Activated CD4-positive, alpha-beta T cell treated with anti-CD3 and anti-CD28 coated beads for 36 hours (primary cell): ENCODE measurements at regions of chr3 and their contacts with region 1.

Region 1: GRCh38 chr3:10758304-10759061 is 57.5 kb upstream of the SLC6A11 start:
- DNase-seq: peak; percentile 75
- ATAC-seq: peak; percentile 72
- H3K4me3 Mint-ChIP-seq: no peak overlapping the region
- H3K27ac Mint-ChIP-seq: no peak overlapping the region
- H3K4me1 Mint-ChIP-seq: peaks cover 5% of the 10 kb centered on the region
- H3K27me3 Mint-ChIP-seq: peaks cover 34% of the 10 kb centered on the region

Region 2: DNA sequence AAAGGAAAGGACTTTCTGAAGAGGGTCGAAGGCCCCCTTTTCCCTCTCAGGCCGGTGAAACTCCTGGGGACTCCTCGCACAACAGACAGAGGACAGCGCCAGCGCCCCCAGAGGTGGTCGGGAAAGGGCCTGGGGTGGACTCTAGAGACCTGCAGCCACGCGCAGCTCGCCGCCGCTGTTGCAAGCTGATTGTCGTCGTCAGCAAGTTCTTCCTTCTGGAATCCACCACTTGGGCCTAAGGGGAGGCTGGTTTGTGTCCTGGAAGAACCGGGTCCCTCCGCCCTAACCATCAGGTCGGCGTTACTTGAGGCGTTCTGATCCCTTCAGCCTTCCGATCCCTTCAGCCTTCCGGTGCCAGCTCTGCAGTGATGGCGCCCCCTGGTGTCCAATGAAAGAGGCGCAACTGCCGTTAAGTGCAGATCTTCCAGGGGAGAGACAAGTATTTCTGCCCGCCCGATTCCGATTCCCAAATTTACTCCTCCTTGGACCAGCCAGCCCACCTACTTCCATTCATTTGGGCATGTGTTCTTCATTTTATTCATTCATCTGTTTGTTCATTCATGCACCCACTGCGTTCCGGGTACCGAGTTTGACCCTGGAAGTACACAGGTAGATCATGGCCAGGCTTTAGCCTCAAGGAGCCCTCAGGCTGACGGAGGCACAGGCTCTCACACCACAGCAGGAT is 19.7 kb before region 1 on chr3:
- CTCF ChIA-PET with region 1: interaction called, 22 read pairs
- POLR2A ChIA-PET with region 1: no interaction called
- intact Hi-C with region 1: no loop called
- DNase-seq: peak; percentile 85
- ATAC-seq: peak; percentile 79
- H3K4me3 Mint-ChIP-seq: no peak overlapping the region
- H3K27ac Mint-ChIP-seq: no peak overlapping the region
- H3K4me1 Mint-ChIP-seq: peaks cover 2% of the 10 kb centered on the region
- H3K27me3 Mint-ChIP-seq: peaks cover 41% of the 10 kb centered on the region

Region 3: DNA sequence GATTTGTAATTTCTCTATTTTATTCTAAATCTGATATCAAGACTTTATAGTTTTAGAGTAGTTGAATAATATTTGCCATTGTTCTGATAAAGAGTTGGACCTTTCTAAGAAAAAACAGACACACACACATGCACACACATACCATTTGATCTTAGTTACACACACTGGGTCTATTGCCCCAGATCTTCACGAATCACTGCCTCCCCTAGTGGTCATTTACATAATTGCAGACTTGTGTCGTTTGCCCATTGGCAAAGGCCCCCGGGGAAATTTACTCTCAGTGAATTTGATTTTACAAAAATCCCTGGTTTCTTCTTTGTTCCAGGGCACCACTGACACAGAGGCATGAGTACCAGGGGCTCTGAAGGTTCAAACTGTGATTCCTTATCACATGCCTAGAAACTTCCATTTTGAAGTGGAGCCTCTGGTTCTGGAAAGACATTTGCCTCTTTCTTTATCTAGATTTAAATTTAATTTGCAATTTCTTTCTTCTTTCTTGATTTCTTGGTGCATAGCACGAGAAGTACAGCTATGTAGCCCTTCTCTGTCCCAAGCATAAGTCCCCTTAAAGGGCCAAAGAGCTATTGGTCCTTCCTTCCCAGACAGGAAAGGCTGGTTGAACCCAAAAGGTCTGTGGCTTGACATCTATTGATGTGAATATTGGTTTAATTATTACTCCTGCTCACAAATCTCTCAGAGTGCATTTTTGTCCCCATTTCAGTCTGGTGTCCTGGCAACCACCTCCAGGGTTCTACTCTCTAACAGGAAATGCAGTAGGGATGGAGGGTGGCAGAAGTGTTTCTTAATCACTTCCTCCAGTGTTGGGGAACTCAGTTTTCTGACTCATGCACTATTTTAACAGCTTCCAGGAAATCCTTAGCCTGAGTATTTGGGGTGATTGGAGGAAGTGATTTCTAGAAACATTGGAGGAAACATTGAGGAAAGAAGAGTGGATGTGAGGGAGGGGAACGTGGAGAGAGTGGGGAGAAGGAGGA is 25.2 kb after region 1 on chr3:
- CTCF ChIA-PET with region 1: interaction called, 8 read pairs
- POLR2A ChIA-PET with region 1: no interaction called
- intact Hi-C with region 1: loop called (anchors 1 kb)
- DNase-seq: peak; percentile 49
- ATAC-seq: peak; percentile 70
- H3K4me3 Mint-ChIP-seq: no peak overlapping the region
- H3K27ac Mint-ChIP-seq: no peak overlapping the region
- H3K4me1 Mint-ChIP-seq: peaks cover 5% of the 10 kb centered on the region
- H3K27me3 Mint-ChIP-seq: peaks cover 29% of the 10 kb centered on the region

Region 4: DNA sequence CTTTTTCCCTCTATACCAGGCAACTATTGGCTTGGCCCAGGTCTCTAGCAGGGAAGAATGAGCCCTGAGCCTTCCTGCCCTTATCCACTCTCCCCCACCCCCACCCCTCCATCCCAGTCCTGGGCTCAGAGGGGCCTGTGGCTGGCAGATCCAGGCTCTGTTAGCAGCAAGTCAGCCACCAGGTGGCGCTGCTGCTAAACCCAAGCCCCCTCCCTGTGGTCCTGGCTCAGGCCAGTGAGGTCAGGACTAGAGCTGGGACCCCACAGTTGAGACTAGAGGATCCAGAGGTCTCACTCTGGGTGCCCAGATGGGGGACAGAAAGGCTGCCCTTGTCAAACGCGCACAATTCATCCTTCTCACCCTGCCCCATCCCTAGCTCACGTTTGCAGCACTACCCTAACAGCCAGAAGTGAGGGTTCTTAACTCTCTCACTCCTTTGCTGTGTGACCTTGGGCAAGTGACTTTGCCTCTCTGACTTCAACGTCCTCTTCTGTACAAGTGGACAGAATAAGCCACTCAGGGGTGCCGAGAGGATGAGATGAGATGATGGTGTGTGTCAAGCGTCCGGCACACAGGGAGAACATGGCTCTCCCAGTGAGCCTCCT is 187.3 kb after region 1 on chr3:
- CTCF ChIA-PET with region 1: interaction called, 12 read pairs
- POLR2A ChIA-PET with region 1: no interaction called
- intact Hi-C with region 1: loop called (anchors 1 to 5 kb)
- DNase-seq: peak; percentile 79
- ATAC-seq: peak; percentile 83
- H3K4me3 Mint-ChIP-seq: no peak overlapping the region
- H3K27ac Mint-ChIP-seq: no peak overlapping the region
- H3K4me1 Mint-ChIP-seq: no peaks in the 10 kb centered on the region
- H3K27me3 Mint-ChIP-seq: peaks cover 5% of the 10 kb centered on the region

Region 5: DNA sequence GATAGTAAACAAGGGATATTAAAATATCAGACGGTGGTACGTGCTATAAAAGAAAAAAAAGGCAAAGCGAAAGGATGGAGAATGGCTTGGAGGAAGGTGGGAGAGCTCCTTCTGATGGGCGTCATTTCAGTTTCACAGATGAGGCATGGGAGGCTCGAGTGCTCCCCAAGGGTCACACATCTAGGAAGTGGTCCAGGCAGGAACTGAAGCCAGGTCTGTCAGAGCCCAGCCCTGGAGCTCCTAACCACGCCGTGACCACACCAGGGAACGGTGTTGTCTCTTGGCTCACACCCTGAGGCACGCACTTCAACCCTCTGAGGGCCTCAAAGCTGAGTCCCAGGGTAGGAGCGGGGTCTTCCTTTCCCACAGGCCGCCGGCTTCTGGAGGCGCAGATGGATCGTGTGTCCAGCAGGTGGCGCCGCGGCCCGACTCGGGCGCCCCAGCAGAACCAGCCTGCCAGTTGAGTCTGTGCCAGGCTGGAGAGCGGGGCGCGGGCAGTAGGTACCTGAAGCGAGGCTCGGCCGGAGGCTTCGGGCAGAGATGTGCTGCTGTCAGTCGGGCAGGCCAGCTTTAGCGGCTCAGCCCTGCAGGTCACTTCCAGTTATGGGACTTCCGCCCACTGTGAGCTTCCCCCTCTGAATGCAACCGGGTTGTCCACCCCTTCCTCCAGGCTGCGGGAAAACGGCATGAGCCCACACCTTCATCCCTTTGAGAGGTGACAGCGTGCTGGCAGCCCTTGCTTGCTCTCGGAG is 302.2 kb after region 1 on chr3:
- CTCF ChIA-PET with region 1: interaction called, 38 read pairs
- POLR2A ChIA-PET with region 1: no interaction called
- intact Hi-C with region 1: loop called (anchors 1 to 2 kb)
- DNase-seq: peak; percentile 77
- ATAC-seq: peak; percentile 76
- H3K4me3 Mint-ChIP-seq: no peak overlapping the region
- H3K27ac Mint-ChIP-seq: no peak overlapping the region
- H3K4me1 Mint-ChIP-seq: no peaks in the 10 kb centered on the region
- H3K27me3 Mint-ChIP-seq: peaks cover 31% of the 10 kb centered on the region

Region 6: DNA sequence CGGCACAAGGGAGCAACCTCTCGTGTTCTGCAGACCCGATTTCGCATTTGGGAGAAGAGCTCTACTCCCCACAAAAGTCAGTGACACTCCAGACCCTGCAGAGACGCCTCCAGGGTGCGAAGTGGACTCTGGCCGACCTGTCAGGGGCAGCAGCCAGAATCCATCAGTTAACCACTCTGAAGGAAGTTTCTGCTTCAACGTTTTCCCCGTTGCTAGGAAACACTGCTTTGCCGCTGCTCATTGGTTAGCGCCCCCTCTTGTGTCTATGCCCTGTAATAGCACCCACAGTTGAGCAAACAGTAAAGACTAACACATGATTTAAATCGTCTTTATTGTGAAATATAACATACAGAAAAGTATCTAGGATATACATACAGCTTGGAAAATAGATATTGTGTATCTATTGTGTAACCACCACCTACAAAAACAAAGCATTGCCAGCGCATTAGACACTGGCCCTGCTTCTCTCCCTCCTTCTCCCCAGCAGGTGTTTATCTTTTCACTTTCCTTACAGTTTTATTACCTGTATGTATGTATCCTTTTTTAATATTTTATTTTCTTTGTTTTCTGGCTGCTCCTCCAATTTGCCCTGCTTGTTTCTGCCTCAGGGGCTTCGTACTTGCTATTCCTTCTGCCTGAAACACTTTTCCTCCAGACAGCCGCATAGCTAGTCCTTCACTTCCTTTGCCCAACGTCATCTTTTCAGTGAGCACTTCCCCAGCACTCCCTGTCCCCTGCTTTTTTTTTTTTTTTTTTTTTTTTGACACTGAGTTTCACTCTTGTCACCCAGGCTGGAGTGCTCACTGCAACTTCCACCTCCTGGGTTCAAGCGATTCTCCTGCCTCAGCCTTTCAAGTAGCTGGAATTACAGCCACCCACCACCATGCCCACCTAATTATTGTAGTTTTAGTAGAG is 1961.8 kb after region 1 on chr3:
- CTCF ChIA-PET with region 1: no interaction called
- POLR2A ChIA-PET with region 1: no interaction called
- intact Hi-C with region 1: loop called in 1 of 2 experiments (anchors 5 kb)
- DNase-seq: peak; percentile 80
- ATAC-seq: peak; percentile 74
- H3K4me3 Mint-ChIP-seq: peak overlapping the region; percentile 36
- H3K27ac Mint-ChIP-seq: no peak overlapping the region
- H3K4me1 Mint-ChIP-seq: peaks cover 9% of the 10 kb centered on the region
- H3K27me3 Mint-ChIP-seq: no peaks in the 10 kb centered on the region